ENCODE measurements at regions of chr11 and their contacts with region 1.

Region 1: DNA sequence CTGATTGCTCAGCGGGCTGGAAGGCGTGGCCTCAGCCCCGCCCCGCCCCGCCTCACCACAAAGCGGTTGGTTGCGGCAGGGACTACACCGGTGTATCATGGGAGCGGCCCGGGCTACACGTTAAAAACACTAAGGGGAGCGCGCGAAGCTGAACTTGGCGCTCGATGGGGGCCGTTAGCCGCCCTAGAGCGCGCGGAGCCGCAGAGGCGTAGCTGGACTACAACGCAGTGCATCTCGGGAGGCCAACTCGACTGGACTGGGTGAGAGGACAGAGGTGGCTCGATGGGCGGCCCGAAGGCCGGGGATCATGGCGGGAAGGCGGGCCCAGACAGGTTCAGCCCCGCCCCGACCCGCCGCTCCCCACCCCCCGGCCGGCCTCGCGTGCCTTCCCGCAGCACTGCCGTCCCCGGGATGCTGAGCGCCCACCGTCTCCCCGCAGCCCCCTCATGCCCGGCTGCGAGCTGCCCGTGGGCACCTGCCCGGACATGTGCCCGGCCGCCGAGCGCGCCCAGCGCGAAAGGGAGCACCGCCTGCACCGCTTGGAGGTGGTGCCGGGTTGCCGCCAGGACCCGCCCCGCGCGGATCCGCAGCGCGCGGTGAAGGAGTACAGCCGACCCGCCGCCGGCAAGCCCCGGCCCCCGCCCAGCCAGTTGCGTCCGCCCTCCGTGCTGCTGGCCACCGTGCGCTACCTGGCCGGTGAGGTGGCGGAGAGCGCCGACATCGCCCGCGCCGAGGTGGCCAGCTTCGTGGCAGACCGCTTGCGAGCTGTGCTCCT is at the start of gene SAC3D1:
- DNase-seq: peak; percentile 80 to 91 (median 85)
- H3K4me3 ChIP-seq: peak within 1 kb of the TSS; percentile 63
- H3K4me3 Mint-ChIP-seq: peak within 1 kb of the TSS; percentile 90 to 95 (median 93)
- H3K27ac ChIP-seq: peak within 1 kb of the TSS; percentile 72
- H3K27ac Mint-ChIP-seq: peak within 1 kb of the TSS; percentile 83 to 95 (median 88)
- H3K4me1 ChIP-seq: peaks cover 8% of the 10 kb centered on the region
- H3K4me1 Mint-ChIP-seq: peaks cover 8 to 19% (median 14%) of the 10 kb centered on the region in 3 donors
- H3K27me3 ChIP-seq: no peaks in the 10 kb centered on the region
- H3K27me3 Mint-ChIP-seq: no peaks in the 10 kb centered on the region
- total RNA-seq, gene SAC3D1: 24.8 to 27.1 TPM

Region 2: GRCh38 chr11:64814712-64815187 is 226.3 kb before region 1 on chr11:
- CTCF ChIA-PET with region 1: no interaction called
- POLR2A ChIA-PET with region 1: no interaction called
- DNase-seq: no peak
- H3K4me3 ChIP-seq: no peak overlapping the region
- H3K4me3 Mint-ChIP-seq: no peak overlapping the region
- H3K27ac ChIP-seq: no peak overlapping the region
- H3K27ac Mint-ChIP-seq: peak overlapping the region in 1 of 8 donors; percentile 29
- H3K4me1 ChIP-seq: peaks cover 5% of the 10 kb centered on the region
- H3K4me1 Mint-ChIP-seq: peaks cover 6 to 14% (median 12%) of the 10 kb centered on the region in 3 donors
- H3K27me3 ChIP-seq: no peaks in the 10 kb centered on the region
- H3K27me3 Mint-ChIP-seq: no peaks in the 10 kb centered on the region

Region 3: DNA sequence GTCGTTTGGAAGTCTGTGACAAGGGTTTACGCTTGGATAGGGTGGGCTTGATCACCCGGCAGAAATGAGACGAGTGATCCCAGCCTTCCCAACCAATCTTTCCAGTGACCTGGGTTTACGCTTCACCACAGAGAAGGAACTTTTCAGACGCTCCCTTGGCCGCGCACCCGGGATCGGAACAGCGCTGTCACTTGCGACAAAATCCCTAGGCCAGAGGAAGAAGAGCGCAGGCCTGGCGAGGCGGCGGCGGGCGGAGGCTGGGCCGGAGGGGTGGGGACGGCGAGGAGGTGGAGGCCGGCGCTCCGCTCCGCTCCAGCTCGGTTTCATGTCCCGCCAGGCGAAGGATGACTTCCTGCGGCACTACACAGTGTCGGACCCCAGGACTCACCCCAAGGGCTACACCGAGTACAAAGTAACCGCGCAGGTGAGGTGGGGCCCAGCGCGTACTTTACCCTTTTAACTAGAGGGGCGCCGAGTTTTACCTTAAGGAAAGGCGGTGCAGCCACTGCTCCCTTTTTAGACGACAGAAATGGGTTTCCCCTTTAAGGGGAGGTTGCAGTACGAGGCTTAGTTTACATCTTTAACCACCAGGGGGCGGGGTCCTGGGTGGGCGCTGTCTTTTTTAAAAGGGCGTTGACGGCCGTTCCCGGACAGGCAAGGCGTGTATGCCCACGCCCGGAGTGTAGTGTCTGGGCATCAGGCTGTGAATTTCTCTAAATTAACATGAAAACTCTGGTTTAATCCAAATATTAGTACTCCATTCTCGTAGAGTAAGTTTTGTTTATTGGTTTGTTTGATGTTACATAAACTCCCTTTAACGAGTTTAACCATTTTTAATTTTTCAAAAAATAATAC is 13.6 kb before region 1 on chr11 and contains the start of gene SNX15:
- CTCF ChIA-PET with region 1: interaction called, 10 read pairs
- POLR2A ChIA-PET with region 1: interaction called, 14 read pairs
- DNase-seq: peak; percentile 83 to 94 (median 92)
- H3K4me3 ChIP-seq: peak within 1 kb of the TSS; percentile 51
- H3K4me3 Mint-ChIP-seq: peak within 1 kb of the TSS; percentile 53 to 92 (median 83)
- H3K27ac ChIP-seq: peak within 1 kb of the TSS; percentile 52
- H3K27ac Mint-ChIP-seq: peak within 1 kb of the TSS; percentile 81 to 96 (median 92)
- H3K4me1 ChIP-seq: peaks cover 17% of the 10 kb centered on the region
- H3K4me1 Mint-ChIP-seq: peaks cover 20 to 24% (median 21%) of the 10 kb centered on the region in 3 donors
- H3K27me3 ChIP-seq: no peaks in the 10 kb centered on the region
- H3K27me3 Mint-ChIP-seq: no peaks in the 10 kb centered on the region
- total RNA-seq, gene SNX15: 18.3 to 21.6 TPM

Region 4: GRCh38 chr11:65060913-65061408 is 19.9 kb after region 1 on chr11:
- CTCF ChIA-PET with region 1: no interaction called
- POLR2A ChIA-PET with region 1: no interaction called
- DNase-seq: no peak
- H3K4me3 ChIP-seq: no peak overlapping the region
- H3K4me3 Mint-ChIP-seq: no peak overlapping the region
- H3K27ac ChIP-seq: no peak overlapping the region
- H3K27ac Mint-ChIP-seq: peak overlapping the region in 2 of 8 donors; percentile 55 to 82
- H3K4me1 ChIP-seq: no peaks in the 10 kb centered on the region
- H3K4me1 Mint-ChIP-seq: peaks cover 0 to 2% (median 0%) of the 10 kb centered on the region in 3 donors
- H3K27me3 ChIP-seq: no peaks in the 10 kb centered on the region
- H3K27me3 Mint-ChIP-seq: peaks cover 0 to 8% of the 10 kb centered on the region in 2 donors